ENCODE measurements at regions of chr7 and their contacts with region 1.

Region 1: DNA sequence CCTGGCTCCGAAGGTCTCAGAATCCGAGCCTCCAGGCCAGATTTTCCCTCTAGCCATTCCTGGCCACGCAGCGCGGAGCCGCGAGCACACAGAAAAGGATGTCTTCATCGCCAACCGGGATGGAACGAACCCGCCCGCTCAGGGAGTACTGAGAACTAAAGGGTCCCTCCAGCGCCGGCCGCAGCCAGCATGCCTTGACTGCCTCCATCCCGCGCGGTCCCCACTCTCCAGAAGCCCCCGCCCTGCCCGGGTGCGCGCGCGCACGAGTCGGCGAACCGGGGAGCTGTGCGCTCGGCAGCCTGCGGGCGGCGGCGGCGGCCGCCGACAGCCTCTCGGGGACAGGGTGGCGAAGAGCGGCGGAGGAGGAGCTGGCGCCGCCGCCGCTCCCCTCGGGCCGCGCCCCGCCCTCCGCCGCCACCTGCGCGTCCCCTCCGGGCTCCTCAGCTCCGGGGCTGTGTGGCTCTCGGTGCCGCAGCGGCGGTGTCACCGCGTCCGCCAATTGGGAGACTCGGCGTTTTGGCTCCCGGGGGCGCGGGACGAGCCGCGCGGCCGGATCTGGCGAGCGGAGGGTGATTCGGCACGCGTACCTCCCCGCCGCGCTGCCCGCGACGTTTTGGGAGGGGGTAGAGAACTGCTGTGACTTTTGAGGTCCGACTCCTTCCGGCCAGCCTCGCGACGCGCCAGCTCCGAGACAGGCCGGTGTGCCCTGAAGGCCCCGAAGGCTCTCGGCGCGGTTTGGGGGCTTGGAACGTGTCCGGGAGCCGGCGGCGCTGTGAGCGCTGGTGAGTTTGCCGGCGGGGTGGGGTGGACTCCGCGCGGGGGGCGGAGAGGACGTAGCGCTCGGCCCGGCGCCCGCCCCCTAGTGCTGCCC is 453 bp upstream of the GALNT17 start:
- DNase-seq: peak; percentile 77
- H3K4me3 ChIP-seq: peak overlapping the region; percentile 52 to 86 (median 78)
- H3K27ac ChIP-seq: peak overlapping the region; percentile 77 to 90 (median 80)
- H3K4me1 ChIP-seq: peaks cover 0 to 44% (median 16%) of the 10 kb centered on the region in 4 donors
- H3K27me3 ChIP-seq: no peaks in the 10 kb centered on the region
- CTCF ChIP-seq: no peak
- EP300 ChIP-seq: no peak
- POLR2A ChIP-seq: no peak

Region 2: DNA sequence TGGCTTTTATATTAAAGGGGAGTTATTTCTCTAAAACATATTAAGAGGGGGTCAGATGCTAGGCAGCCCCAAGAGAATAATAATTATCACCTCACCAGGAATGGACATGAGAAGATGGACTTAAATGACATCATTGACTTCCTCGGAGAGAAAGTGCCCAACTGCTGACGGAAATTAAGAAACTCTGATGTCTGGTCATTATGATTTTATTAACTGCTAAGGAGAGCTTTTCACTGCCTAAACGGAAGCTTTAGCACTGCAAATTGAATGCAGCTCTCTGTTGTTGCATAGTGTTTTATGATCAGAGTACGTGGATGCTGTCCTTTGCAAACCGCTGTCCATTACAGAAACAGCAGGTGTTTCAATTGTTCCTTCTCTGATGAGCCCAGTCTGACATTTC is 88.9 kb before region 1 on chr7:
- intact Hi-C with region 1: no loop called
- DNase-seq: no peak
- H3K4me3 ChIP-seq: no peak overlapping the region
- H3K27ac ChIP-seq: no peak overlapping the region
- H3K4me1 ChIP-seq: no peaks in the 10 kb centered on the region
- H3K27me3 ChIP-seq: no peaks in the 10 kb centered on the region
- CTCF ChIP-seq: no peak
- EP300 ChIP-seq: no peak
- POLR2A ChIP-seq: no peak

Region 3: GRCh38 chr7:71220210-71220695 is 88.8 kb after region 1 on chr7:
- intact Hi-C with region 1: loop called (anchors 1 kb)
- DNase-seq: no peak
- H3K4me3 ChIP-seq: no peak overlapping the region
- H3K27ac ChIP-seq: peak overlapping the region; percentile 49 to 86 (median 82)
- H3K4me1 ChIP-seq: peaks cover 0 to 13% (median 3%) of the 10 kb centered on the region in 4 donors
- H3K27me3 ChIP-seq: no peaks in the 10 kb centered on the region
- CTCF ChIP-seq: no peak
- EP300 ChIP-seq: peak; percentile 72 to 98 (median 90)
- POLR2A ChIP-seq: no peak